PC-9 (cell line): ENCODE measurements at regions of chr7 and their contacts with region 1.

Region 1: GRCh38 chr7:117435475-117436043 is 8.3 kb upstream of the ASZ1 start:
- DNase-seq: peak; percentile 12 to 39
- H3K4me3 ChIP-seq: no peak overlapping the region
- H3K27ac ChIP-seq: no peak overlapping the region
- H3K4me1 ChIP-seq: no peaks in the 10 kb centered on the region
- H3K27me3 ChIP-seq: no peaks in the 10 kb centered on the region
- CTCF ChIP-seq: no peak

Region 2: DNA sequence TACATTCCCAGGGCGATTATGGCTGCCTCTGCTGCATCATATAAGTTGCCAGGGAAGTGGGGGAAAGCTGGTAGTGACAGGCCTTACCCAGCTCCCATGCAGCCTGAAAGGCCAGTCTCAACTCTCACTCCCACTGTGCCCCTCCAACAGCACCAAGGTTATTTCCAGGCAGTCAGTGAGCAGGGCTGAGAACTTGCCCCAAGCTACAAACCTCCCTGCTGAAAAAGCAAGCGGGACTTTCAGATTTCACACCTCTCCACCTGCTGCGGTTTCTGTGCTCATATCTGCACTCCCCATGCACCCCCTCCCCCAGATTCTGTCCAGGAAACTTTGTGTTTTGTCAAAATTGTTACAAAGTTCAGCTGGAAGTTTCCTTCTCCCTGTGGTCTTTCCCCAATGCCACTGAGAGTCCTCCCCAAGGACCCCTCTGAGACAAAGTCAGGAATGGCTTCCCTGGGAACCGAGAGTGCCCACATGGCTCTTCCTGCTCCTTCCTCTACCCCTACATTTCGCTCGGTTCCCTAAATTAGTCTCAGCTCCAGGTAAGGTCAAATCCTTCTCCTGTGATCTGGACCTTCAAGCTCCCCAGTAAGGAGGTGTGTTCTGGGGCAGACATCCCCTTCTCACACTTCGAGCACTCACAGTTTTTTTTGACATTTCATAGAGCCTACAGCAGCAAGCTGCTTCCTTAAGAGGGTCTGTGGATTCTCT is 87.4 kb before region 1 on chr7:
- CTCF ChIA-PET with region 1: no interaction called
- POLR2A ChIA-PET with region 1: no interaction called
- intact Hi-C with region 1: no loop called
- DNase-seq: no peak
- H3K4me3 ChIP-seq: no peak overlapping the region
- H3K27ac ChIP-seq: no peak overlapping the region
- H3K4me1 ChIP-seq: no peaks in the 10 kb centered on the region
- H3K27me3 ChIP-seq: no peaks in the 10 kb centered on the region
- CTCF ChIP-seq: no peak

Region 3: GRCh38 chr7:117412390-117412789 is 23.2 kb before region 1 on chr7:
- CTCF ChIA-PET with region 1: no interaction called
- POLR2A ChIA-PET with region 1: interaction called, 13 read pairs
- intact Hi-C with region 1: no loop called
- DNase-seq: no peak
- H3K4me3 ChIP-seq: no peak overlapping the region
- H3K27ac ChIP-seq: no peak overlapping the region
- H3K4me1 ChIP-seq: no peaks in the 10 kb centered on the region
- H3K27me3 ChIP-seq: no peaks in the 10 kb centered on the region
- CTCF ChIP-seq: no peak